ENCODE measurements at regions of chr6 and their contacts with region 1.

Region 1: DNA sequence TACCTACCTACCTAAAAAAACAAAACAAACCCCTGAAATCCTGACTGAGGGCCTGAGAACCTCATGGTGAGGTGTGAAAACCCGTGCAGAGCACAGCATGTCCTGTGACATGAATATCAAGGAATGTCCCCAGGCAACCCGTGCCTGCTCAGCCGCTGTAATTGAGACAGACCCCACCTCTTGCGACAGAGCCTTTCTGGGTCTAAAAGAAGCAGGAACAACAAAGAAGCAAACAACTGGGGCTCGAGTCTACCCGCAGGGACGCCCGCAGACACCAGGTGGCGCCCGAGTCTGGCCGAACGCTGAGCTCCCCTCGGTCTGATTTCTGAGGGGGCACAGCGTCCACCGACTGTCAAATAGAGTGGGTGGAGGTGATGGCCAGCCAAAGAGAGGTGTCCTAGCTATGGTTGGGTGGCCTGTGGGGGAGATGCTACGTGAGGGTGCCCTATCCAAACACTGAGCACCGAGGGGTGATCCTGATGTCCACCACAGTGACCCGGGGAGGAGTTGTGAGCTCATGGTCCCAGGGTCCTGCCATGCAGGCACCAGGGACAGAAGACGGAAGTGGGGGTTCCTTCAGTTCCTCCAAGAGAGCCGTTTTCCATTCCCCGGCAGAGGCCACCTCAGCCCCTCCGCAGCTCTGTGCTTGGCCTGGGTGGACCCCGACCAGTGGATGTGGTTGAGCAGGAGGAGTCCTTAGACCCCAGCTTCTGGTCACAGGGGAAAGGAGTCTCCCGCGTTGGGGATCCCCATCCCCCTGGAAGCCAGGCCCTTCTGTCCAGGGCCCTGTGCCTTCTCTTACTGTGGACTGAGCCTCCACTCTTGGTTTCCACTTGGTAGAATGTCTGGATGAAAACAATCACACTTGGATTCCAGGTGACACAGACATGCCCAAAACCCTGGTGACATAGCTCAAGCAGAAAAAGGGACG is 268.2 kb downstream of the CDC5L start:
- DNase-seq: peak; percentile 58 to 81 (median 71)
- H3K4me3 ChIP-seq: no peak overlapping the region
- H3K27ac ChIP-seq: no peak overlapping the region
- H3K4me1 ChIP-seq: no peaks in the 10 kb centered on the region
- H3K27me3 ChIP-seq: no peaks in the 10 kb centered on the region
- CTCF ChIP-seq: peak; percentile 52 to 77 (median 72)
- EP300 ChIP-seq: no peak
- POLR2A ChIP-seq: no peak

Region 2: DNA sequence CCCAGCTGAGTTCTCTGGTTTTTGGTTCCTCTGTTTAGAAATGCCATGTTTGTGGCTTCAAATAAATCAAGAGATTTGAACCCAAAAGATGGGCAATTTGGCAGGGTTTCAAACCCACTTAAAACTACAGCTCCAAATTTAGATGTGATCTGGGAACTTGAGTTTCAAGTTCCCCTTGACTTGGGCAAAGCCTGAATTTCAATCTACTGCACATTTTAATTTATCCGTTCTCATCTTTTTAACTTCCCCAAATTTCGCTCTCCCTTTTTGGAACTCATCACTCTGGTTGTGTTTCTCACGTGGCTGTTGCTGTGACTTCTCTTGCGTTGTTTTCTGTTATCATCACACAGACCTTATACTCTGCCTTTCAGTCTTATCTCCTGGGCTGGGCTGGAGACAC is 37.3 kb before region 1 on chr6:
- intact Hi-C with region 1: no loop called
- DNase-seq: no peak
- H3K4me3 ChIP-seq: no peak overlapping the region
- H3K27ac ChIP-seq: no peak overlapping the region
- H3K4me1 ChIP-seq: no peaks in the 10 kb centered on the region
- H3K27me3 ChIP-seq: no peaks in the 10 kb centered on the region
- CTCF ChIP-seq: no peak
- EP300 ChIP-seq: no peak
- POLR2A ChIP-seq: no peak

Region 3: DNA sequence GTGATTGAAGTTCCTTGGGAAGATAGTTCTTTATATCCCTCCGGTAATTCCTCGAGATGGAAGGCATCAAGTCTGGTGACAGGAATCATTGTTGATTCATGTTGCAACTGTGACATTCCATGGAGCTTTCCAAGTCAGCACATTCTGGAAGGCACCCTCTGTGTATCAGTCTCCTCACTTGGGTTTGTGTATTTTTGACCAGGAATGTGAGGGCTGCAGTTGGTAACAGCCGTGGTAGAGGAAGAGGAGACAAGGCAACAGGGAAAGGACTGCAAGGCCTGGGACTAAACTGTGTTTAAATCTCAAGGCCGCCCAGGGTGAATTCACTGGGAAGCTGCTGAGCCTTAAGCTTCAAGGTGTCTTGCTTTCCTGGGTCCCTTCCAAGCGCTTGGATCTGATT is 1261.0 kb after region 1 on chr6:
- intact Hi-C with region 1: loop called in 1 of 4 experiments (anchors 10 kb)
- DNase-seq: no peak
- H3K4me3 ChIP-seq: no peak overlapping the region
- H3K27ac ChIP-seq: no peak overlapping the region
- H3K4me1 ChIP-seq: no peaks in the 10 kb centered on the region
- H3K27me3 ChIP-seq: no peaks in the 10 kb centered on the region
- CTCF ChIP-seq: no peak
- EP300 ChIP-seq: no peak
- POLR2A ChIP-seq: no peak